Ovary (tissue), 10 donors: ENCODE measurements at regions of chr15 and their contacts with region 1.

Region 1: GRCh38 chr15:96067677-96068076 is 262.8 kb upstream of the NR2F2 start:
- DNase-seq: no peak
- H3K4me3 ChIP-seq: no peak overlapping the region
- H3K27ac ChIP-seq: no peak overlapping the region
- H3K4me1 ChIP-seq: peaks cover 3% of the 10 kb centered on the region
- H3K27me3 ChIP-seq: no peaks in the 10 kb centered on the region
- CTCF ChIP-seq: no peak
- EP300 ChIP-seq: no peak
- POLR2A ChIP-seq: no peak

Region 2: GRCh38 chr15:96107916-96108315 is 40.2 kb after region 1 on chr15:
- intact Hi-C with region 1: loop called in 1 of 4 experiments (anchors 2 kb)
- DNase-seq: no peak
- H3K4me3 ChIP-seq: no peak overlapping the region
- H3K27ac ChIP-seq: no peak overlapping the region
- H3K4me1 ChIP-seq: no peaks in the 10 kb centered on the region
- H3K27me3 ChIP-seq: no peaks in the 10 kb centered on the region
- CTCF ChIP-seq: no peak
- EP300 ChIP-seq: no peak
- POLR2A ChIP-seq: no peak

Region 3: GRCh38 chr15:96126859-96127258 is 59.2 kb after region 1 on chr15:
- intact Hi-C with region 1: no loop called
- DNase-seq: no peak
- H3K4me3 ChIP-seq: no peak overlapping the region
- H3K27ac ChIP-seq: no peak overlapping the region
- H3K4me1 ChIP-seq: no peaks in the 10 kb centered on the region
- H3K27me3 ChIP-seq: no peaks in the 10 kb centered on the region
- CTCF ChIP-seq: no peak
- EP300 ChIP-seq: no peak
- POLR2A ChIP-seq: no peak